ENCODE measurements at regions of chr21 and their contacts with region 1.

Region 1: DNA sequence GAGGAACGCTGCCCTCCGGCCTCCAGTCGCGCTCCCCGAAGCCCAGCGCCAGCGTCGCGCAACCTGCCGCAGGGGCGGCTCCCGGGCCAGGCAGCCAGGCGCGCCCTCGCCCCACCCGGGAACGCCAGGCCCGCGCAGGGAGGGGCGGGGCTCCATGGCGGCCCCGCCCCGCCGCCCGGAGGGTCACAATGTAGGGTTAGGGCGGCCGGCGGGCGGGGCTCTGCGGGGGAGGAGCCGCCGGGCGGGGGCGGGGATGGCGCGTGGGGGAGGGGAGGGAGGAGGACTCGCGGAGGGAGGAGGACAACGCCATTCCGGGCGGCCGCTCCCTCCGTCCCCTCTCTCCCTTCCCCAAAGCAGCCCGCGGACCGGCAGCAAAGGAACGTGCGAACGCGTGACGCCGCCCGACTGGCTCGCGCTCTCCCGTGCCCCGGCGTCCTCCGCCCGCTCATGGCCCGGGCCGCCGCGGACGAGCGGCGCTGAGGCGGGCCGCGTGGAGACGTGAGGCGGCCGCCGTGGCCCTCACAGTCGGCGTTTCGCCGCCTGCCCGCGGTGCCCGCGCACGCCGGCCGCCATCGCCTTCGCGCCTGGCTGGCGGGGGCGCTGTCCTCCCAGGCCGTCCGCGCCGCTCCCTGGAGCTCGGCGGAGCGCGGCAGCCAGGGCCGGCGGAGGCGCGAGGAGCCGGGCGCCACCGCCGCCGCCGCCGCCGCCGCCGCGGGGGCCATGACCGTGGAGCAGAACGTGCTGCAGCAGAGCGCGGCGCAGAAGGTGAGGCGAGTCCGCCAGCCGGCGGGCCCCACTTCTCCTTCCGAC is at the start of gene USP25:
- DNase-seq: peak; percentile 92 to 97 (median 94)
- ATAC-seq: peak; percentile 97 to 99 (median 98)
- H3K4me3 ChIP-seq: peak within 1 kb of the TSS; percentile 64 to 95 (median 88)
- H3K27ac ChIP-seq: peak within 1 kb of the TSS; percentile 90 to 98 (median 93)
- H3K4me1 ChIP-seq: peaks cover 0 to 38% (median 18%) of the 10 kb centered on the region in 12 donors
- H3K27me3 ChIP-seq: no peaks in the 10 kb centered on the region
- CTCF ChIP-seq: peak in 4 of 12 donors; percentile 16 to 31 (median 24)
- POLR2A ChIP-seq: peak in 1 of 2 donors; percentile 87
- total RNA-seq, gene USP25: 33.8 to 55.3 (median 45.7) TPM

Region 2: DNA sequence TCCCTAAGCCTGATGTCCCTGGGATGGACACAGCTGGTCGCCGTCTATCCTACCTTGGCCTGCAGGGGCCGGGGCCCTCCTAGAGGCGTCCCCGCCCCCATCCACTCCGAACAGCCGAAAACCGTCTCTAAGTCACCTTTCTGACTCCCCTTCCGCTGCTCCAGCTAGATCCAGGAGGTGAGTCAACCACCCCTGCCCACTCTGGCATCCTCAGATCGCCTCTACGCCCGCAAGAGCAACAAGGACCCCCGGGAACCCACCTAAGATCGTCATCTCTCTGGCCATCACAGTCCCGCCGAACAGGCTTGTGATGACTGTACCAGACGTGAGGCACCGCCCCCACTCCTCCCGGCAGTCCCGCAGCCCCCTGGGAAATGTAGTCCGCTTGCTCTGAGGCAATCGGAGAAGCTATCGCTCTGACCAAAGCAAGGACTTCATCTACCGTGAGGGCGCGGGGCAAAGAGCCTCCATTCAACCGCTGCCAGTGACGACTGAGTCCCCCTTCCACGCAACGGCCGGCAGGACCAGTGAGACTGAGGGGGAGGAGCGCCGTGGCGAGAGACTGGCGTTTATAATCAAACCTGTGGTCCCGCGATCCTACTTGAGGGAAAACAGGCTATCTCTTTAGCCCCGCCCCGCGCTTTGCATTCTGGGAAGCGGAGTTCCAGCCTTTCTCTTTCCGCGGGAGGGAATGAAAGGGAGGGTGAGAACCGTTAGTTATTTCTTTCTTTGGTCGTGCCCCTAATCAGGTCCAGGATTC is 1346.9 kb before region 1 on chr21 and contains the start of gene HSPA13:
- intact Hi-C with region 1: loop called in 2 of 10 experiments (anchors 10 kb)
- DNase-seq: peak; percentile 99 to 100 (median 100)
- ATAC-seq: peak; percentile 99 to 100 (median 100)
- H3K4me3 ChIP-seq: peak within 1 kb of the TSS; percentile 55 to 93 (median 81)
- H3K27ac ChIP-seq: peak within 1 kb of the TSS; percentile 68 to 96 (median 90)
- H3K4me1 ChIP-seq: peaks cover 0 to 41% (median 19%) of the 10 kb centered on the region in 12 donors
- H3K27me3 ChIP-seq: no peaks in the 10 kb centered on the region
- CTCF ChIP-seq: no peak
- POLR2A ChIP-seq: peak in 1 of 2 donors; percentile 50
- total RNA-seq, gene HSPA13: 10.2 to 23.7 (median 16.0) TPM

Region 3: DNA sequence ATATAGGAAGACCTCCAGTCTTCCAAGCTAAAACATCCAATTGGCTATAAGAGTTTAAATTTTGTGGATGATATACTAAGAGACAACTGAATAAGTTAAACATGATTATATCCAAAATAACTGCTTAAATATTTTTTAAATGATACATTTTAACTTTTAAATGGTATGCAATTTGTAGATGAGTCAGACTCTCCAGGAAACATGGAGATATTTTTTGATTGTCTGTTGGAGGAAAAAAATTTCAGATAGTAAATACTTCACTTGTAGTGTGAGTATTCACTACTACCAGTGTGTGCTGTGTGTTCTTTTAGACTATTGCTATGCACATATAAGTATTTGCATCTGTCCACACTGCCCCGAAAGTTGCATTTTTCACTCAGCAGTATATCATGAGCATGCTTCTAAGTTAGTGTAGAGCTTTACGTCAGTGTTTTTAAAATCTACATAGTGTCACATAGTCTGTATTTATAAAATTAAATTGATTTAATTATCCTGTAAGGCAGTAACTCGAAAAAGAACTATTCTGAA is 91.0 kb after region 1 on chr21:
- intact Hi-C with region 1: loop called in 7 of 10 experiments (anchors 2 to 10 kb)
- DNase-seq: no peak
- ATAC-seq: no peak
- H3K4me3 ChIP-seq: no peak overlapping the region
- H3K27ac ChIP-seq: no peak overlapping the region
- H3K4me1 ChIP-seq: peaks cover 0 to 11% (median 4%) of the 10 kb centered on the region in 12 donors
- H3K27me3 ChIP-seq: no peaks in the 10 kb centered on the region
- CTCF ChIP-seq: no peak
- POLR2A ChIP-seq: no peak

Region 4: GRCh38 chr21:15826147-15826780 is 96.4 kb after region 1 on chr21:
- intact Hi-C with region 1: loop called in 8 of 10 experiments (anchors 2 to 10 kb)
- DNase-seq: peak in 1 of 5 donors; percentile 11
- ATAC-seq: peak; percentile 46 to 76 (median 68)
- H3K4me3 ChIP-seq: peak overlapping the region in 1 of 12 donors; percentile 7
- H3K27ac ChIP-seq: peak overlapping the region; percentile 25 to 82 (median 63)
- H3K4me1 ChIP-seq: peaks cover 0 to 28% (median 8%) of the 10 kb centered on the region in 12 donors
- H3K27me3 ChIP-seq: no peaks in the 10 kb centered on the region
- CTCF ChIP-seq: peak; percentile 18 to 67 (median 53)
- POLR2A ChIP-seq: no peak

Region 5: GRCh38 chr21:15837603-15838002 is 107.7 kb after region 1 on chr21:
- intact Hi-C with region 1: loop called in 1 of 10 experiments (anchors 10 kb)
- DNase-seq: no peak
- ATAC-seq: peak; percentile 85 to 86 (median 86)
- H3K4me3 ChIP-seq: no peak overlapping the region
- H3K27ac ChIP-seq: peak overlapping the region in 6 of 12 donors; percentile 8 to 72 (median 40)
- H3K4me1 ChIP-seq: peaks cover 0 to 27% (median 8%) of the 10 kb centered on the region in 12 donors
- H3K27me3 ChIP-seq: no peaks in the 10 kb centered on the region
- CTCF ChIP-seq: no peak
- POLR2A ChIP-seq: no peak